Heart right ventricle (tissue), 16 donors: ENCODE measurements at regions of chr4 and their contacts with region 1.

Region 1: GRCh38 chr4:120399826-120400225 is 333.2 kb upstream of the MAD2L1 start:
- DNase-seq: no peak
- ATAC-seq: no peak
- H3K4me3 ChIP-seq: no peak overlapping the region
- H3K27ac ChIP-seq: no peak overlapping the region
- H3K4me1 ChIP-seq: no peaks in the 10 kb centered on the region
- H3K27me3 ChIP-seq: no peaks in the 10 kb centered on the region
- CTCF ChIP-seq: no peak

Region 2: DNA sequence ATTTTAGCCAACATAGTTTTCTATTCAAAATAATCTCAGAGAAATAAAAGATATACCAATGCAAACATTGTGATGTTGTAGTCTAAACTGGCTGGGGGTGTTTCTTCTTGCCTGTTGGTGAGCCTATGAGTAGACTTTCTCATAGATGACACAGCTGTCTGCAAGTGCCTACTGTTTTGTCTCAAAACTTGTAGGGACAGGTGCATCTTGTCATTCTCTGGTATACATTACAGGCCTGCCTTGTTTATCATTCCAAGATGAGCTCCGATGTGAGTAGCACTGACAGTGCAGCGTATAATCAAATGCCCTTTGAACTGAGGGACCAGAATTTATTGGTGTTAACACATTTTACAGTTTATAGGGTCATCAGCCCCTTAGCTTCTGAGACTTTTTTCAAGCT is 168.9 kb after region 1 on chr4:
- intact Hi-C with region 1: loop called in 1 of 10 experiments (anchors 5 kb)
- DNase-seq: no peak
- ATAC-seq: no peak
- H3K4me3 ChIP-seq: no peak overlapping the region
- H3K27ac ChIP-seq: no peak overlapping the region
- H3K4me1 ChIP-seq: no peaks in the 10 kb centered on the region
- H3K27me3 ChIP-seq: no peaks in the 10 kb centered on the region
- CTCF ChIP-seq: no peak